ENCODE measurements at regions of chr5 and their contacts with region 1.

Region 1: DNA sequence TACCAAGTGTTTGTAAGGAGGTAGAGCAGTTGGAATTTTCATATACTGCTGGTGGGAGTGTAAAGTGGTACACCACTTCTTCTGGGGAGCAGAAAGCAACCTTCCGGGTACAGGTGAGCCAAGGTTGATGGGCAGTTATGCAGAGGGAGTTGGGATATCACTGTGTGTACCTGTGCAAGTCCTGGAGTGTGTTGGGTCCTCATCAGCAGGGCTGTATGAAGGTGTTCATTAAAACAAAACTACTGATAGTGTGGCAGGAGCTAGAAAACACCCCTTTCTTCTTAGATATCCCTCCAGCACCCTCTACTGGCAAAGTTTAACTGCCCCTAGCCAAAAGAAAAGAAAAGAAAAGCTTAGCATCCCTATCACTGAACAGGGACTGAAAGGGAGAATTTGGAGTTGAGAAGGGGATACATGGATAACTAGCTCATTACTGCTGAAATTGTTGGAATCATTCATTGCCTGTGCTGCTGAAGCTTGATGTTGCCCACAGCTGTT is 10.7 kb downstream of the MARCHF6 start:
- DNase-seq: peak in 2 of 9 experiments; percentile 47 to 58
- ATAC-seq: peak; percentile 68
- H3K4me3 ChIP-seq: no peak overlapping the region
- H3K4me3 Mint-ChIP-seq: no peak overlapping the region
- H3K27ac ChIP-seq: no peak overlapping the region
- H3K27ac Mint-ChIP-seq: peak overlapping the region; percentile 10
- H3K4me1 ChIP-seq: peaks cover 31% of the 10 kb centered on the region
- H3K4me1 Mint-ChIP-seq: peaks cover 79% of the 10 kb centered on the region
- H3K27me3 ChIP-seq: no peaks in the 10 kb centered on the region
- H3K27me3 Mint-ChIP-seq: no peaks in the 10 kb centered on the region
- CTCF ChIP-seq: no peak

Region 2: GRCh38 chr5:10377081-10377480 is 12.8 kb after region 1 on chr5:
- CTCF ChIA-PET with region 1: interaction called, 4 read pairs
- POLR2A ChIA-PET with region 1: no interaction called
- intact Hi-C with region 1: loop called in 1 of 2 experiments (anchors 2 kb)
- DNase-seq: peak in 4 of 9 experiments; percentile 15 to 54 (median 28)
- ATAC-seq: peak; percentile 44
- H3K4me3 ChIP-seq: no peak overlapping the region
- H3K4me3 Mint-ChIP-seq: peak overlapping the region; percentile 26
- H3K27ac ChIP-seq: no peak overlapping the region
- H3K27ac Mint-ChIP-seq: no peak overlapping the region
- H3K4me1 ChIP-seq: peaks cover 33% of the 10 kb centered on the region
- H3K4me1 Mint-ChIP-seq: peaks cover 67% of the 10 kb centered on the region
- H3K27me3 ChIP-seq: no peaks in the 10 kb centered on the region
- H3K27me3 Mint-ChIP-seq: no peaks in the 10 kb centered on the region
- CTCF ChIP-seq: no peak

Measured in CD8-positive, alpha-beta T cell (primary cell).